Activated CD4-positive, alpha-beta T cell treated with anti-CD3 and anti-CD28 coated beads for 36 hours (primary cell): ENCODE measurements at regions of chr11 and their contacts with region 1.

Region 1: DNA sequence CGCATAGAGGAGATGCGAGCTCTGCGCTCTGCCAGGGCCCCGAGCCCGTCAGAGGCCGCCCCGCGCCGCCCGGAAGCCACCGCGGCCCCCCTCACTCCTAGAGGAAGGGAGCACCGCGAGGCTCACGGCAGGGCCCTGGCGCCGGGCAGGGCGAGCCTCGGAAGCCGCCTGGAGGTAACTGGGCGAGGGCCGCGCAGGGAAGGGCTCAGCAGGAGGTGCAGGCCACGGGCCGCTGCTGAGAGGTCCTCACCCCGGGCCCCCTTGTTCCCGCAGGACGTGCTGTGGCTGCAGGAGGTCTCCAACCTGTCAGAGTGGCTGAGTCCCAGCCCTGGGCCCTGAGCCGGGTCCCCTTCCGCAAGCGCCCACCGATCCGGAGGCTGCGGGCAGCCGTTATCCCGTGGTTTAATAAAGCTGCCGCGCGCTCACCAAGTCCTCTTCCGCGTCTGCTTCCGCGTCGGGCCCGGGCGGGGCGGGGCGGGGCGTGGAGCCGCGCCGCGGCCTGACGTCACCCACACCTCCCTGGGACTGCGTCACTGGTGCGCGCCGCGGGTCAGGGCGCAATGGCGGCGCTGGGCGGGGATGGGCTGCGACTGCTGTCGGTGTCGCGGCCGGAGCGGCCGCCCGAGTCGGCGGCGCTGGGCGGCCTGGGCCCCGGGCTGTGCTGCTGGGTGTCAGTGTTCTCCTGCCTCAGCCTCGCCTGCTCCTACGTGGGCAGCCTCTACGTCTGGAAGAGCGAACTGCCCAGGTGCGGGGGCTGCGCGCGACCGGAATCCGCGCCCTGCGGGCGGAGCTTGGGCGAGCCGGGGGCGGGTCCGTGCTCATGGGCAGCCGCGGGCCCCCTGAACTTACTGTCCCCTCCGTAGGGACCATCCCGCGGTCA is at the start of gene RCE1:
- DNase-seq: peak; percentile 95
- ATAC-seq: peak; percentile 85
- H3K4me3 Mint-ChIP-seq: peak within 1 kb of the TSS; percentile 92
- H3K27ac Mint-ChIP-seq: peak within 1 kb of the TSS; percentile 92
- H3K4me1 Mint-ChIP-seq: peaks cover 51% of the 10 kb centered on the region
- H3K27me3 Mint-ChIP-seq: no peaks in the 10 kb centered on the region
- total RNA-seq, gene RCE1: 24.9 to 25.6 TPM

Region 2: DNA sequence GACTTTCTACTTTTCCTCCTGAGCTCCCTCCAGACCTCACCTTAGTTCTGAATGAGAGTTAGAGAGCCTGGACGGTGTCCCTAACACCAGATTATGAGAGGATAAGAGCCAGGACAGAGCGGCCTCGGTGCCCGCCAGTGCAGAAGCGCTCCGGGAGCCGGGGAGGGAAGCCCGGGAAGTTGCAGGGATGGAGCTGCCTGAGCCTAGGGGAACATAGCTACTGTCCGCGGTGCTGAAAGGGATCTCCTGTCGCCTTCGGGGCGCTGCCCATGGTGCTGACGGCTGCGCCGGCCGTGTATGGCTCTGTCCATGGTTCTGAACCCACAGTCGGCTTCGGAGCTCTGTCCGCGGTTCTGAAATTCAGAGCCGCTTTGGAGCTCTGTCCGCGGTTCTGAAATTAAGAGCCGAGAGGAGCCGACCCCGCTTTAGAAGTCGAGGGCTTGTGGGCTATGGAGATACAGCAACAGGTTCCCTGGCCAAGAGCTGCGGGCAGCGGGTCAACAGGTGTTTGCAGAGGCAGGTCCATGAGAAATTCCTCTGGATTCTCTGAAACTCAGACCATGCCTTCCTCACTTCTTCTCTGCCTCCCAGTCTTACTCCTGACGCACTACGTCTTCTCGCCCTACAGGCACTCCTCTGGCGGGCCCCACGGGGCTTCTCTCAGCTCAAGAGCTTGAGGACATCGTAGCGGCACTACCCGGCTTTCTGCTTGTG is 421.5 kb before region 1 on chr11:
- CTCF ChIA-PET with region 1: no interaction called
- POLR2A ChIA-PET with region 1: no interaction called
- intact Hi-C with region 1: loop called in 1 of 2 experiments (anchors 5 kb)
- DNase-seq: peak; percentile 93
- ATAC-seq: peak; percentile 40
- H3K4me3 Mint-ChIP-seq: no peak overlapping the region
- H3K27ac Mint-ChIP-seq: no peak overlapping the region
- H3K4me1 Mint-ChIP-seq: peaks cover 30% of the 10 kb centered on the region
- H3K27me3 Mint-ChIP-seq: peaks cover 35% of the 10 kb centered on the region

Region 3: DNA sequence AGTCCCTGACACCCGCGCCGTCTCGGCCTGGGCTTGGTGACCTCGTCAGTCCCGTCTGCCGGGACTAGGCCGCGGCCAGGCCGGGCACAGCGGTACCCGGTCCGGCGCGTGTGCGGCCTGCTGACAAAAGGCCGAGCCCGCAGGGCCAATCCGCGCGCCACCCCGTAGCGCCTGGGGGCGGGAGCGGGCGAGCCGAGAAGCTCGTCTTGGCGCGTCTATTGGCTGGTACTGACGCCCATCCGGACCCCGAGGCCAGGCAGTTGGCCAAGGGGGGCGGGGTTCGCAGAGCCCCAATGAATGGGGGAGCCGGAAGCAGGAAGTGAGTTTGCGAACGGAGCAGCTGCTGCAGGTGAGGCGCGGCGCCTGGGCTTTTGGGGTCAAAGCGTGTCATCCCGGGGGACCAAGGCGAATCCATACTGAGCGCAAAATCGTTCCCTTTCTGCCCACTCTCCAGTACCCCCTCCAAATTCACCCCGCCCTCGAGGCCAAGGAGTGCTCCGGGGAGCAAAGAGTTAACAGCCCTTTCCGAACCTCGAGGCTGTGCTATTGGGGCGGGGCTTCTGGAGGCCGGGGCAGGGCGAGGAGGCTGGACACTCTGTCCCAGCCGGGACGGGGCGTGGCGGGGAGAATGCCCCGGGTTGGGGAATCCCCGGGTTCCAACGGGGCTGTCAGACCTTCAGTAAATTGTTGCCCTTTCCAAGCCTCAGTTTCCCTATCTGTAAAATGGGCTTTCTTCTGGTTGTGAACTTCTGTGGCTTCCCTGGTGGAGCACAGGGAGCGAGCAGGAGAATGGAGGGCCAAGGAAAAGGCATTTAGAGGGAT is 362.8 kb before region 1 on chr11 and contains the start of gene DPP3:
- CTCF ChIA-PET with region 1: no interaction called
- POLR2A ChIA-PET with region 1: interaction called, 3 read pairs
- intact Hi-C with region 1: loop called in 1 of 2 experiments (anchors 1 kb)
- DNase-seq: peak; percentile 98
- ATAC-seq: peak; percentile 98
- H3K4me3 Mint-ChIP-seq: peak within 1 kb of the TSS; percentile 90
- H3K27ac Mint-ChIP-seq: peak within 1 kb of the TSS; percentile 86
- H3K4me1 Mint-ChIP-seq: peaks cover 22% of the 10 kb centered on the region
- H3K27me3 Mint-ChIP-seq: no peaks in the 10 kb centered on the region
- total RNA-seq, gene DPP3: 87.1 to 91.9 TPM

Region 4: DNA sequence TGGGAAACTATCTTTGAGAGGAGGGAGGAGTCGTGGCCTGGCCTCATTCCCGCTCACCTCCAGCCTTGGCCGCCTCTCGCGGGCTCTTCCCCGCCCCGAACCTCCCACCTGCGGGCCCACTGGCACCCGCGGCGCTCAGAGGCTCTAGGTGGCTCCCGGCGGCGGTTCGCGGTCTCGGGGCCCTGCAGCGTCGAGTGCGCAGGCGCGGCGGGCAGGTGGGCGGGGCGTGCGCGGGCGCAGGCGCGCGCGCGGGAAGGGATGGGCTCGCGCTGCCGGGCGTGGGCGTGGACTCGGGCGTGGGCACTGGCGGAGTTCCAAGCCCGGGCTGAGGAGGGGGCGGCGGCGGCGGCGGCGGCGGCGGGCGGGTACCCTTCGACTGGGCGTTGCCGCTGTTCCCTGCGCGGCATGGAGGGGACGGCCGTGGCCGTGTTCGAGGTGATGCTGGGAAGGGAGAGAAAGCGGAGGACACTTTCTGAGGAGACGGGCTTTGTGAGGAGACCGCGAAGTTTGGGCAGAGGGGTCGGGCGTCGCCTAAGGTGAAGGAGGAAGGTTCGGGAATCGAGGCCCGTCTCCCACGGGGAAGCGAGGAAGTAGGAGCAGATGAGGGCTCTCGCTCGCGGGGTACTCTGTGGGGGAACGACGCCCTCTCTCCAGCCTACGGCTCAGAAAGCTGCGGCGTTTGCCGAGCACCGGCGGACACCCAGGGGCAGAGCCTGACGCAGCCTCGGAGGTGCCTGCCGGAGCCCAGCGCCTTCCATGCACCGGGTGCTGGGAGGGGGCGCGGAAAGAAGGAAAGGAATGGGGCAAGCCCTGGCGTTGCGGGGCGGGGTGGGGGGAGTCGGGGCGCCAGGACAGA is 98.4 kb before region 1 on chr11:
- CTCF ChIA-PET with region 1: no interaction called
- POLR2A ChIA-PET with region 1: no interaction called
- intact Hi-C with region 1: loop called (anchors 1 to 5 kb)
- DNase-seq: peak; percentile 93
- ATAC-seq: peak; percentile 88
- H3K4me3 Mint-ChIP-seq: peak overlapping the region; percentile 95
- H3K27ac Mint-ChIP-seq: peak overlapping the region; percentile 84
- H3K4me1 Mint-ChIP-seq: peaks cover 7% of the 10 kb centered on the region
- H3K27me3 Mint-ChIP-seq: no peaks in the 10 kb centered on the region

Region 5: DNA sequence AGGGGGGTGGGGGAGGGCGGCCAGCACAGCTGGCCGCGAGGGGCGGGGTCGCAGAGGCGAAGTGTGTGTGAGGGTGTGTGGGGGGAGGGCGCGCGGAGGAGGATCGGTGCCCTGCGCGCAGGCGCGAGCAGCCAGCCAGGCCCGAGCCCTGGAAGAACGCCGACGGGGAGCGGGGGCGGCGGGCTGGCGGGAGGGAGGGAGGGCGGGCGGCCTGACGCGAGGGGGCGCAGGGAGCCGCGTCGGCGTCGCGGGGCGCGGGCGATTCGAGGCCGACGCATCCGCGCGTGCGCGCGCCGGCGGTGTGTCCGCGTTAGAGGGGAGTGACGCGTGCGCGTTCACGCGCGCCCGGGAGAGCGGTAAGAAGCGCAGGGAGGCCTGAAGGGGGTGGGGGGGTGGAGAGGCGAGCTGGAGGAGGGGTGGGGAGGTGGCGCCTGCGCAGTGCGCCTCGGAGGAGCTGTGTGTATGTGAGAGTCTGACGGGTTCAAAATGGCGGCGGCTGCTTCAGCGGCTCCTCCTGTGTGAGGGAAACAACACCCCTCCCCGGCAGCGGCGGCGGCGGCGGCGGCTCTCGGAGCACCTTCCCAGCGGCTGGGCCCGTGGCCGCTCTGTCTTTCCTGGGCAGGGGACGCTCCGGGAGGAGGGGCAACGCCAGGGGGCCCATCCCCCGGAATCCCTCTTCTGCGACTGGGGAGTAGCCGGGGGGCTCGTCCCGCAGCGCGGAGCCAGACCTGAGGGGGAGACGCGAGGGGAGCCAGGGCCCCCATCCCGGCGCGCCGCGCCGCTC is 275.9 kb after region 1 on chr11 and contains the start of gene KDM2A:
- CTCF ChIA-PET with region 1: no interaction called
- POLR2A ChIA-PET with region 1: no interaction called
- intact Hi-C with region 1: loop called in 1 of 2 experiments (anchors 1 kb)
- DNase-seq: peak; percentile 100
- ATAC-seq: peak; percentile 85
- H3K4me3 Mint-ChIP-seq: peak within 1 kb of the TSS; percentile 98
- H3K27ac Mint-ChIP-seq: peak within 1 kb of the TSS; percentile 83
- H3K4me1 Mint-ChIP-seq: peaks cover 28% of the 10 kb centered on the region
- H3K27me3 Mint-ChIP-seq: no peaks in the 10 kb centered on the region
- total RNA-seq, gene KDM2A: 74.8 to 89.7 TPM

Region 6: GRCh38 chr11:68459886-68460740 is 1617.0 kb after region 1 on chr11:
- CTCF ChIA-PET with region 1: no interaction called
- POLR2A ChIA-PET with region 1: no interaction called
- intact Hi-C with region 1: loop called in 1 of 2 experiments (anchors 2 kb)
- DNase-seq: peak; percentile 97
- ATAC-seq: peak; percentile 93
- H3K4me3 Mint-ChIP-seq: peak overlapping the region; percentile 86
- H3K27ac Mint-ChIP-seq: peak overlapping the region; percentile 89
- H3K4me1 Mint-ChIP-seq: peaks cover 31% of the 10 kb centered on the region
- H3K27me3 Mint-ChIP-seq: no peaks in the 10 kb centered on the region